AG04450 (cell line): ENCODE measurements at regions of chr3 and their contacts with region 1.

Region 1: DNA sequence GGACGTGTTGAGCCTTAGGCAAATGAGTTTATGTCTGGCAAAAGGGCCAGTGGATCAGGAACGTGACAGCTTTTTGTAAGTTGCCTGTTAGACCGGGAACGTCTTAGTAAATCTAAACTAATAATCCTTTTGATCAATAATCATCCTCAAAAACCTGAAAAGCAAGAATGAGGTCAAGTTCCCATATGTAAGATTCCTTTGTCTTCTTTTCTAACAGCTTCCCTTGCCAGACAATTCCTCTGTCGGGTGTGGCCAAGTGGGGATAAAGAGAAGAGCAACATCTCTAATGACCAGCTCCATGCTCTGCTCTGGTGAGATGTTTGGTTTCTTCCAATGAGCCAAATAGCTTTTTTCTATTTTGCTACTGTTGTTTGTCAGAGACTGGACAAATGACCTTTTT is 19.8 kb downstream of the FANCD2OS start:
- DNase-seq: no peak
- H3K4me3 ChIP-seq: no peak overlapping the region
- H3K27ac ChIP-seq: no peak overlapping the region
- H3K27me3 ChIP-seq: no peaks in the 10 kb centered on the region
- CTCF ChIP-seq: no peak

Region 2: DNA sequence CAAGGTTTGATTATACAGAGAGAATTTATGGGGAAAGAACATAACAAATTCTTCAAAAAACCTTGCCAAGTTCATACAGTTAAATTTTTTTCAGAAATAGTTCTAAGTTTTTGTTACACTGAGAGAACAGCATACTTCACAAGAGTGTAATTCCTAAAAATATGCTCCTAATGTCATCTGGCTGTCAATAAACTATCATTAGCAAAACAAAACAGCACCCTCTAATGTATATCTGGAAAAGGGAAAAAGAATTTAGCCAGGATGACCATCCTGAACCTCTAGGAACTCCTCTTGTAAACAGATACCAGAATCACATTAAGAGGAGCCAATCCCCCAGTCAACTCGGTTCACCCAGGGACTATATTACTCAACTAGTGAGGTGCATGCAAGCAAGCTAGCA is 1188.2 kb before region 1 on chr3:
- CTCF ChIA-PET with region 1: interaction called, 11 read pairs
- POLR2A ChIA-PET with region 1: no interaction called
- DNase-seq: peak; percentile 29
- H3K4me3 ChIP-seq: no peak overlapping the region
- H3K27ac ChIP-seq: no peak overlapping the region
- H3K27me3 ChIP-seq: no peaks in the 10 kb centered on the region
- CTCF ChIP-seq: 0 out of 2 replicates have a peak, but pooled peaks have one; percentile 22

Region 3: DNA sequence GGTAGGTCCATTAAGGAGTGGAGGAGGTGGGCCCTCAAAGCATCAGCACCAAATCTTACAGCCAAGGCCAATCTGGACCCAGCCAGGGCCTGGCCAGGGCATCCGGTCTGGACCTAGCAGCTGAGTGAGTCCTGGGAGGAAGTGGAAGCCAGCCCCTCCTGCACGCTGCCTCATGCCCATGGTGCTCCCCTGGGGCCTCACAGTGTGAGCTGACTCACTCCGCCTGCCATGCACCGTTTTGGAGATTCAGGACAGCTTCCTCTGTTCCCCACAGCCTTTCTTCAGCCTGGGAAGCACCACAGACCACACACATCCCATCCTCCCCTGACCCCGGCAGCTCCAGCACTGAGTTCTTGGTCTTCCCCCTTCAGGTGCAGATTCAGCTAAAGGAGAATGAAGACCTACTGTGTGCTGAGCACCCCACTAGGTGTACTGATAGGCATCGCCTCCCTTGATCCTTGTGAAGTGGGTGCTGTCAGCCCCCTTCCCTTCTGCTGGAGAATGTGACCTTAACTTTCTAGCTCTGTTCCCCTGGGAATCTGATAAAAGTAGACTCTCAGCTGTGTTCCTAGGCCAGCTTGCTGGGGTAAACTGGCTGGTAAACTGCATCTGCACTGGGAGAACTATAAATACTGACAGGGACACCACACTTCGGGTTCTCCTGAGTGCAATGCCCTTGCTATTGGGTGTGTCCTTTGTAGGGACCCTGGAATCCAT is 269.5 kb after region 1 on chr3:
- CTCF ChIA-PET with region 1: no interaction called
- POLR2A ChIA-PET with region 1: no interaction called
- DNase-seq: peak; percentile 58
- H3K4me3 ChIP-seq: no peak overlapping the region
- H3K27ac ChIP-seq: peak overlapping the region; percentile 68
- H3K27me3 ChIP-seq: peaks cover 4% of the 10 kb centered on the region
- CTCF ChIP-seq: no peak